HAP-1 (cell line): ENCODE measurements at regions of chr6 and their contacts with region 1.

Region 1: GRCh38 chr6:27157459-27158315 is 89.8 kb upstream of the PRSS16 start:
- DNase-seq: peak; percentile 67 to 84
- H3K4me3 ChIP-seq: peak overlapping the region; percentile 31
- H3K4me1 ChIP-seq: no peaks in the 10 kb centered on the region; the same call in 1 of the 2 replicates
- H3K27me3 ChIP-seq: no peaks in the 10 kb centered on the region

Region 2: DNA sequence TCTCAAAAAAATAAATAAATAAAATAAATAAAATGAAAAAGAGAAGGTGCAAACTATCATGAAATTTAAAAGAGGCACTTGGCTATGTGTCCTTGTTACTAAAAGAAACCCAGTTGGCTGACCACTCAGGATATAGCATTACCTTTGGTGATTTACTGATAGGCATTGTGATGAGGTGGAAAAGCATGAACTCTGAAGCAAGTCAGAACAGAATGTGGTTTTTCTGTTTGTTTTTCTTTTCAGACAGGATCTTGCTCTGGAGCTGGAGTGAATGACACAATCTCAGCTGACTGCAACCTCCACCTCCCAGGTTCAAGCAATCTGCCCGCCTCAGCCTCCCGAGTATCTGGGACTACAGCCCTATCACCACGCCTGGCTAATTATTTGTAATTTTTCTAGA is 283.3 kb after region 1 on chr6:
- in situ Hi-C with region 1: no loop called
- DNase-seq: no peak
- H3K4me3 ChIP-seq: no peak overlapping the region
- H3K4me1 ChIP-seq: no peaks in the 10 kb centered on the region
- H3K27me3 ChIP-seq: no peaks in the 10 kb centered on the region

Region 3: GRCh38 chr6:27575594-27576361 is 418.1 kb after region 1 on chr6:
- in situ Hi-C with region 1: no loop called
- DNase-seq: peak; percentile 60 to 65
- H3K4me3 ChIP-seq: peak overlapping the region; percentile 24
- H3K4me1 ChIP-seq: no peaks in the 10 kb centered on the region
- H3K27me3 ChIP-seq: no peaks in the 10 kb centered on the region; the same call in 1 of the 2 replicates

Region 4: DNA sequence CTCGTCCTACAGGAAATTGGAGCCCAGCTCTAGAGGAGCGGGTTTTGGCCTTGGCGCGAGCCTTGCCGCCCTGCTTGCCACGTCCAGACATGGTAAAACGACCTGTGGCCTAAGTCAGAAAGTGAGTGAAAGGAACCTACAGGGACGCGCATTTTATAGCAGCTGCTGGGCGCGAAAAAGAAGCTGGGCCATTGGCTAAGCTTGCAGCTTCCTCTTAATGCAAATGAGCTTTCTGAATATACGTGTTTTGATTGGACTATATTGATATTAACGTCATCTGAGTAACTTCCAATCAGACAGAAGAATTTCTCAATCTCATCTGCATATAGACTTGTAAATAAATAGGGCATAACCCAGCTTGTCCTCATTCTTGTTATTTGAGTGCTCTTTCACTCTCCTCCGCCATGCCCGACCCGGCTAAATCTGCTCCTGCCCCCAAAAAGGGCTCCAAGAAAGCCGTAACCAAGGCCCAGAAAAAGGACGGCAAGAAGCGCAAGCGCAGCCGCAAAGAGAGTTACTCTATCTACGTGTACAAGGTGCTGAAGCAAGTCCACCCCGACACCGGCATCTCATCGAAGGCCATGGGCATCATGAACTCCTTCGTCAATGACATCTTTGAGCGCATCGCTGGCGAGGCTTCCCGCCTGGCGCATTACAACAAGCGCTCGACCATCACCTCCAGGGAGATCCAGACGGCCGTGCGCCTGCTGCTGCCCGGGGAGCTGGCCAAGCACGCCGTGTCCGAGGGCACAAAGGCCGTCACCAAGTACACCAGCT is 735.6 kb after region 1 on chr6:
- in situ Hi-C with region 1: loop called (anchors 5 kb)
- DNase-seq: peak; percentile 92 to 97
- H3K4me3 ChIP-seq: peak overlapping the region; percentile 63
- H3K4me1 ChIP-seq: peaks cover 33% of the 10 kb centered on the region
- H3K27me3 ChIP-seq: no peaks in the 10 kb centered on the region